AG04449 (cell line): ENCODE measurements at regions of chr7 and their contacts with region 1.

Region 1: GRCh38 chr7:108569381-108570145 is at the starts of genes DNAJB9 and THAP5:
- DNase-seq: peak; percentile 97
- H3K4me3 ChIP-seq: peak within 1 kb of the TSS; percentile 89
- CTCF ChIP-seq: no peak

Region 2: DNA sequence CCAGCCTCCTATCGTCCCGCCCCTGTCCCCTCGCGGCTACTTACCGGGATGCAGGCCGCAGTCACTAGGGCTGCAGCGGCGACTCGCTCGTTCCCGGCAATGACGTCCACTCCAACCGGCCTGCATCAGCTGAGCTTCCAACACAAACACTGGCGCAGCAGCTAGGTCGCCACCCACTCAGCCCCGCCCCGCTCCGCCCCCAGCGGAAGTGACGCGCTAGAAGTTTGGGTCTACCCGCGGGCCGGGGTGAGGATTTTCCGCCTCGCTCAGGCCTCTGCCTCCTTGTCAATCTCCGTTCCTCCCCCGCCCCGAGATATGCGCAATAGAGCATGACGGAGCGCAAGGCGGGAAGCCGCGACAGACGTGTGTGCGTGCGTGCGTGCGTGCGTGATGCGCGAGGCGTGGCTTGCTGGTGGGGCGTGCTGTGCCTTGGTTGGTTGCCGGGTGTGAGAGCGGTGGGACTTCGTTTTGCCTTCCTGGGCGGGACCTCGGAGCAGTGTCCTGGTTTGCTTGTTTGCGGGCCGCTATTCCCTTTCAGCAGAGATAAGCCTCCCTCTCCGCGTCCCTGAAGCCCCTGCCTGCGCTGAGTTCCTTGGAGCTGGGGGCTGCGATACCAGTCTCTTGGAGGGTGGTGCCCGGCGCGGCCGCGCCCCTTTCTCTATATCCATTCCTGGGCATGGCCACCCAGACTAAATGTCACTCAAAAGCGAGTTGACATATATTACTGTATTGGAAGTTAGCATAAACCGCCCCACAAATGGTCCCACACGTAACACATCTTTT is 43.4 kb before region 1 on chr7 and contains the start of gene PNPLA8:
- CTCF ChIA-PET with region 1: no interaction called
- POLR2A ChIA-PET with region 1: interaction called, 11 read pairs
- DNase-seq: peak; percentile 97
- H3K4me3 ChIP-seq: peak within 1 kb of the TSS; percentile 88
- CTCF ChIP-seq: no peak

Region 3: DNA sequence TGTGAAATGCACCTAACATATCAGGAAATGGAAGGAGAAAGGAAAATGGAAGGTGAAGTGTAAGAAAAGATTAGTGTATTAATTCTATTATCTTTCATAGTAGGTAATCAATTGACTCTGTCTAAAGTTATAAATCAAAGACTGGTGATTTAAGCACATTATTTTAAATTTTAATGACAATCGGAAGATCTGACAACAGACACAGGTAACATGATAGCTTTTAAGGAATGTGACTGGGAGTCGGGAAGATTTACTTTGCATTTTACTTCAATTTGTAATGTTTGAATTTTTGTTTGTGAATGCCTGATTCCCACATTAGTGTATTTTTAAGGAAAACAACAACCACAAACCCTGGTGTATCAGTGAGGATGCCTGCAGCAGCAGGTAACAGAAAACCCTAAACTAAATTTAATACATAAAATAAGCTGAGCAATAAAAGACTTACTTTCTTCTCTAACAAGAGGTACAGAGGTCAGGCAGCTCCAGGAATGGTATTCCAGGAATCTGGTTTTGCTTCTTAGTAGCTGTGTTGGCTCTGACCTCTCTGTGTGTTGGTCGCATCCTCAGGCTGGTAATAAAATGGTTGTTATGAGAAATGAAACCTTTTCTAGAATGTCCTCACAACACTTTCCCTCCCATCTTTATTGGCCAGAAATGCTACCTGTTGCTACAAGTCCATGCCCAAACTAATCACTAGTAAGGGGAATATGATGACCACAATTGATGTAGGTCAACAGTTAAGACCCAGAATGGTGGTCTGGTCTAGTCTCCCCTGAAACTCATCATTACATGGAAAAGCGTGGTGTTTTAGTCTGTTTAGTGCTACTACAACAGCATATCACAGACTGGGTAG is 12.3 kb after region 1 on chr7:
- CTCF ChIA-PET with region 1: no interaction called
- POLR2A ChIA-PET with region 1: no interaction called
- DNase-seq: peak; percentile 19
- H3K4me3 ChIP-seq: no peak overlapping the region
- CTCF ChIP-seq: no peak

Region 4: GRCh38 chr7:108592646-108593201 is 23.2 kb after region 1 on chr7:
- CTCF ChIA-PET with region 1: no interaction called
- POLR2A ChIA-PET with region 1: no interaction called
- DNase-seq: no peak
- H3K4me3 ChIP-seq: no peak overlapping the region
- CTCF ChIP-seq: peak; percentile 14